BJ (cell line): ENCODE measurements at regions of chr12 and their contacts with region 1.

Region 1: GRCh38 chr12:87848248-87848868 is 180.8 kb downstream of the C12orf50 start:
- DNase-seq: peak; percentile 2
- H3K4me3 ChIP-seq: no peak overlapping the region
- H3K27me3 ChIP-seq: no peaks in the 10 kb centered on the region
- CTCF ChIP-seq: peak; percentile 72

Region 2: GRCh38 chr12:85923767-85924331 is 1924.5 kb before region 1 on chr12:
- CTCF ChIA-PET with region 1: interaction called, 22 read pairs
- POLR2A ChIA-PET with region 1: no interaction called
- DNase-seq: no peak
- H3K4me3 ChIP-seq: no peak overlapping the region
- H3K27me3 ChIP-seq: no peaks in the 10 kb centered on the region
- CTCF ChIP-seq: peak; percentile 55

Region 3: GRCh38 chr12:87182696-87183233 is 665.6 kb before region 1 on chr12:
- CTCF ChIA-PET with region 1: no interaction called
- POLR2A ChIA-PET with region 1: no interaction called
- DNase-seq: no peak
- H3K4me3 ChIP-seq: no peak overlapping the region
- H3K27me3 ChIP-seq: no peaks in the 10 kb centered on the region
- CTCF ChIP-seq: no peak

Region 4: DNA sequence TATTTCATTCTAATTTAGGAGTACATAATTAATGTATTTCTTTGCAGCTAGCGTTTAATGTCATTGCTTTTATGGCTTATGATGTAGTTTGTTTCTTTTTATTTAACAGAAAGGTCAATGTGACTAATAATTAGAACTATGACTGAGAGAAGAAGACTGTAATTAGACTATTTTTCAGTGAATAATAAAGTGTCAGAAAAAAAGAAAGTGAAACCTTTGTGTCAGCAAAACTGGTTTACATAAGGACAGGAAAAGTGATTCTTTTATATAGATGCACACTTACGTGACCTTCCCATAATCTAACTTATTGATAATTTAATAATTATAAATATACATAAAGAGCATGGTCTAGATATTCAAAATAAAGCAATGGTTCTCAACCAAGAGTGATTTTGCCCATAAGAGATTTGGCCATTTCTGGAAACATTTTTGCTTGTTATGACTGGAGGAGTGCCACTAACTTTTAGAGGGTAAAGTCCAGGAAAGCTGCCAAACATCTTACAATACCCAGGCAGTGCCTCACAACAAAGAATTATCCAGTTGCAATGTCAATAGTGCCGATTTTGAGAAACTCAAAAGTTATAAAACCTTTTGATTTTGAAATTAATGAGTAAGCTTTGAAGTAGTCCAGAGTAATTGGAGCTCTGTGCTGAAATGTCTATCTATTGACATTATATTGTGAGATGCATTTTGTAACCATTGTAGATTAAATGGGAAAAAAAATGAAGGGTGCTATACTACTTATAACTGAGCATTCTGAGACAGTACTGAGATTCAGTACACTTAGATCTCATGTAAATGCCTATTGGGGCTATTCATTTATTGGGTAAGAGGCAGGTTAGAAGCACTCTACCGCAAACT is 46.3 kb before region 1 on chr12:
- CTCF ChIA-PET with region 1: no interaction called
- POLR2A ChIA-PET with region 1: no interaction called
- DNase-seq: no peak
- H3K4me3 ChIP-seq: no peak overlapping the region
- H3K27me3 ChIP-seq: no peaks in the 10 kb centered on the region
- CTCF ChIP-seq: no peak

Region 5: GRCh38 chr12:87935216-87935615 is 86.9 kb after region 1 on chr12:
- CTCF ChIA-PET with region 1: no interaction called
- POLR2A ChIA-PET with region 1: no interaction called
- DNase-seq: no peak
- H3K4me3 ChIP-seq: no peak overlapping the region
- H3K27me3 ChIP-seq: no peaks in the 10 kb centered on the region
- CTCF ChIP-seq: no peak

Region 6: DNA sequence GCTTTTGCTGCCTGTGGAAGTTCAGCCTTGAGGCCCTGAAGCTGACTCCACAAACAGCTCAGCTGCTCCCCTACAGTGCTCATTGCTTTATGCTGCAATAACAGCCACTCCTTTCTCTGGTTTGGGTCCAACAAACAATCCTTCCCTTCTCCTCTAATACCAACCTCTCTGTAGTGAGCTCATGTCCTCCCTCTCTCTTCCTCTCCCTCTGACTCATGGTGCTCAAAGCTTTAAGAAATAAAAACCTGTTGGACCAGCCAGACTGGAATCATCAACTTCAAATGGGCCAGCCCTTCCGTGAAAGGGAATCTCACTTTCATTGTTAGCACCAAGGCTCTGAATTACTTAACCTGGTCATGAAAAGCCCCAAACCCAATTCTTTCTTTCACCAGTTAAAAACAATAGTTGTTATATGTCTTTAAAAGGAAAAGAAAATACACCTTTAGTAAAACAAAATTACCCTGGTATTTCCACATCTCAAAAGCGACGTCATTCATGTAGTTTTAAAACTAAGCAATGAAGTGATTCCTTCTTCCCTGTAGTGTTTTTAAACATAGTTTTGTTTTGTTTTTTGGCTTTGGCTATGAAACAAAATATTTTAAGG is 1377.6 kb after region 1 on chr12:
- CTCF ChIA-PET with region 1: no interaction called
- POLR2A ChIA-PET with region 1: no interaction called
- DNase-seq: peak; percentile 76
- H3K4me3 ChIP-seq: no peak overlapping the region
- H3K27me3 ChIP-seq: no peaks in the 10 kb centered on the region
- CTCF ChIP-seq: no peak